AG04449 (cell line): ENCODE measurements at regions of chr3 and their contacts with region 1.

Region 1: GRCh38 chr3:66276705-66277274 is 56.0 kb downstream of the SLC25A26 start:
- DNase-seq: no peak
- H3K4me3 ChIP-seq: no peak overlapping the region
- CTCF ChIP-seq: peak; percentile 45

Region 2: DNA sequence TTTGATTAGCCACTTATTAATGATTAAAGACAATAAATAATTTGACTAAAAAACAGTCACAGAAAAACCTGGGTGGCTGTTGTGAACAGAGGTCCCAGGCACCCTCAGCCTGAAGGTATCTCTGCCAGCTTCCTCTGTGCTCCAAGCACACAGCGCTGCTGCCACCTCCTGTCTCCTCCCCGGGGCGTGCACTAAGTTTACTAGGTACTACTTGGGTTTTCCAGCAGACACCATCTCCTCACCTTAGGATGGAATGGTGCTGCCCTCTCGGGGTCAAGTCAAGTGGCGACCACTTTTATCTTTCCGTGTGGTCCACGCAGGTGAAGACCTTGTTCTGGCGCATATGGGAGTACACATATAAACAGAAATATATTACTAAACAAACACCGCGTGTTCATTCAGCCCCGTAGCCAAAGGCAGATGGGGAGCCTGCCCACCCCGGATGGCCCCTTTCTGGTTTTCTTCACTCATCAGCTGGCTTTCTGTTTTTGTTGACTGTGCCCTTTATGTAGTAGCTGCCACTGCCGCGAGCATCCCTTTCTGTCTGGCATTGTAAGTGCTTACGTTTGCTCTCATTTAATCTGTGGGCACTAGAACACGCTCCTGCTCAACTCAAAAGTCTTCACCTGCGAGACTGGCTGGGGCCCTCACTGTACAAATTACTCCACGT is 96.0 kb after region 1 on chr3:
- CTCF ChIA-PET with region 1: interaction called, 12 read pairs
- POLR2A ChIA-PET with region 1: no interaction called
- DNase-seq: no peak
- H3K4me3 ChIP-seq: no peak overlapping the region
- CTCF ChIP-seq: peak; percentile 22

Region 3: GRCh38 chr3:66378256-66378823 is 101.5 kb after region 1 on chr3:
- CTCF ChIA-PET with region 1: interaction called, 12 read pairs
- POLR2A ChIA-PET with region 1: no interaction called
- DNase-seq: no peak
- H3K4me3 ChIP-seq: no peak overlapping the region
- CTCF ChIP-seq: peak; percentile 51

Region 4: GRCh38 chr3:66830301-66830700 is 553.5 kb after region 1 on chr3:
- CTCF ChIA-PET with region 1: interaction called, 10 read pairs
- POLR2A ChIA-PET with region 1: no interaction called
- DNase-seq: no peak
- H3K4me3 ChIP-seq: no peak overlapping the region
- CTCF ChIP-seq: no peak